ENCODE measurements at regions of chr6 and their contacts with region 1.

Region 1: DNA sequence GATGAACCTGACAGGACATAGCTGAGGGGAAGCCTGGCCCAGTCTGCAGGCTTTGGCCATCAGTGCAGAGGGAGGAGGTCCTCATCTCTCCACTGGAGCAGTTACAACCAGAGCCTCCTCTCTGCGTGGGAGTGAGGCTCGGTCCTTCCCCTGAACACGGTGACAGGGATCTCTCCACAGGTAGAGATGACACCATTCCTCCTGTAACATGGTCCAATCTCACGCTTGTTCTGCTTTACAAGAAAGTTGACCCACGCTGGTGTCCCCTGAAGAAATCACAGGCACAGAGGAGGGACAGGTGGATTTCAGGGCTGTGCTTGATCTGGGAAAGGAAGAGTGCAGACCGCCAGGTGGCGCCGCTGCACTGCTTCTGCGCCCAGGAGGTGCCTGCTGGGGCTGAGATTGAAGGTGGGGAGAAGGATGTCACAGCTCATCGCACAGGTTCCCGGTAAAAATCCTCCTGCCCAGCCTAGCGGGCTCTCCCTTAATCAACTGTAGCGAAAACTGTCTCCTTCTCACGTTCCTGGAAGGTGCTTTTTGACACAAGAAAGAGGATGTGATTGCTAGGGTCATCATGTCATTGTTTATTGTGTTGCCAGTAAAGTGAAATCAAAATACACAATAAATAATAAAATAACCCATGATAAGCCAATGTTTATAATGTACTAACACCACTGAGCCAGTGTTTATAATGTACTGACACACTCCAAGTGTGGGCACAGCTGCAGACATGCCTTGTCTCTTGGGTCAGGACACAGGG is 20.4 kb downstream of the HLA-G start:
- DNase-seq: peak; percentile 56
- H3K4me3 ChIP-seq: no peak overlapping the region
- H3K27ac ChIP-seq: no peak overlapping the region
- H3K4me1 ChIP-seq: peaks cover 5% of the 10 kb centered on the region
- H3K27me3 ChIP-seq: no peaks in the 10 kb centered on the region
- CTCF ChIP-seq: peak; percentile 78 to 96

Region 2: DNA sequence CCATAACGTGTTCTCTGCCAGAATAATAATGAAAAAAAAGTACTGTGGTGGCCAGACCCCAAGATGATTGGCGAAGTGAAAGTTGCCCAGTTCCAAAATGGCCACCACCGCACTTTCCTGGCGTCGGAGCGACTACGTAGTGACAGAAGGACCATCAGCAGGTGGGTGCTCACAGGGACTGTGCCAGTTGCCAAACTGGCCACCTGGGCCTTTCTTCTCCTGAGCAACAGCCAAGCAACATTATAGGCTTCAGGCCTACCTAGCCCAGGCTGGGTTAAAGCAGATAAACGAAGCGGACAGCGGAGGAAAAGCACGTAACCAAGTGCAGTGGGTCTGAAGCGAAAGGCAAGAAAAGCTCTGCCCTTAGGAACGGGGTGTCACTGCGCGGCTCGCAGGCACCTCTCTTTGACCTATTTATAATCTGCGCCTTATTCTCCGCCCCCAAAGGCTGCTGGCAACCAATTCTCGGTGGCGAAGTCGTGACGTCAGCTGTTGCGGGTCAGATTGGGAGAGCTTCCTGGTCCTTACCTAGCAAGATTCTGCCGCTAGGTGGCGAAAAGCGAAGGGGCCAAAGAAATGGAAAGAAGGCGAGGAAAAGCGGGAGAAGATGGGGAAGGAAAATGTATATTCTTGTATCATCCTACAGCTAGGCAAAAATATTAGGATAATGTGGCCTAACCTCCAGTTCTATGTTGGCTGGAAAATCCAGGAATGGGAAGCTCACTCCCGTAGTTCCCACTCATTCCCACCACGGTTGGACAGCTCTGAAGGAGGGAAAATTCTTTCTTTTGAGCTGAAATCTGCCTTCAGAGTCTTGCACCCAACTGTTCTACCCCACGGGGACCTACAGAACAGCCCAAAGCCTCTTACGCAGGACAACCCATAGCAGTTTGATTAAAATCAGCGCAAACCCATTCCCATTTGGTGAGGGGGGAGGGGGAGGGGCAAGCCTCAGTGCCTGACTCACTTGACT is 198.1 kb before region 1 on chr6:
- CTCF ChIA-PET with region 1: no interaction called
- dilution Hi-C with region 1: no loop called
- in situ Hi-C with region 1: no loop called
- intact Hi-C with region 1: loop called (anchors 5 kb)
- DNase-seq: peak; percentile 96
- H3K4me3 ChIP-seq: peak overlapping the region; percentile 57 to 60 (median 59)
- H3K27ac ChIP-seq: peak overlapping the region; percentile 68
- H3K4me1 ChIP-seq: peaks cover 6% of the 10 kb centered on the region
- H3K27me3 ChIP-seq: no peaks in the 10 kb centered on the region
- CTCF ChIP-seq: peak; percentile 93 to 98

Region 3: DNA sequence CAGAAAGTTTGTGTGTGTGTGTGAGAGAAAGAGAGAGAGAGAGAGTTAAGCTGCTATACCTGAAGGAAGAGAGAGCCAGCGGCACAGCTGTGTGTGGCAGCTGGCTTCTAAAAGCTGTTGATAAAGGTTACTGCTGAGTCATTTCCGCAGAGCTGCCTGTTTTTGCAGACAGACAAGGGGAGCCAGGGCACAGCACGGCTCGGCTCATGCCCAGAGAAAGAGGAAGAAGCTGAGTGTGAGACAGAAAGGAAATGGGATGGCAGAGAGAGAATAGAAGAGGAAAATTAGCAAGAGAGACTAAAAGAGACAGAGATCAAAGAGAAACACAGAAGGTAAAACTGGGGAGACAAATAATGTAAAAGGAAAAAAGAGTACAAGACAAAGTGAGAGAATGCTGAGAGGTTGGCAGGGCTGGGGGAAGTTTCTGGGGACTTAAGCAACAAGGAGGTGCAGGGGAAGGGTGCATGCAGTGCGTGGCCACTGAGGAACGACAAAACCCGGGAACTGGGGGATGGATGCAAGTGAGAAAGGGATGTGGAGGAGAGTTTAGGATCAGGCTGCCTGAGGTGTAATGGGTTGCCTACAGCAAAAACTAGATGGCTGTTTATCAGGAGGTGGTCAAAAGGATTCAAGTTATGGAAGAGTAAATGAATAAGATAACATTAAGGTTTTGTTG is 117.0 kb after region 1 on chr6:
- CTCF ChIA-PET with region 1: no interaction called
- dilution Hi-C with region 1: no loop called
- in situ Hi-C with region 1: no loop called
- intact Hi-C with region 1: loop called (anchors 1 kb)
- DNase-seq: peak; percentile 84
- H3K4me3 ChIP-seq: peak overlapping the region; percentile 32 to 61 (median 45)
- H3K27ac ChIP-seq: peak overlapping the region; percentile 66
- H3K4me1 ChIP-seq: peaks cover 39% of the 10 kb centered on the region
- H3K27me3 ChIP-seq: no peaks in the 10 kb centered on the region
- CTCF ChIP-seq: no peak

Region 4: GRCh38 chr6:30013291-30013922 is 165.4 kb after region 1 on chr6:
- CTCF ChIA-PET with region 1: interaction called, 3 read pairs
- dilution Hi-C with region 1: no loop called
- in situ Hi-C with region 1: loop called (anchors 5 kb)
- intact Hi-C with region 1: loop called (anchors 1 kb)
- DNase-seq: no peak
- H3K4me3 ChIP-seq: no peak overlapping the region
- H3K27ac ChIP-seq: no peak overlapping the region
- H3K4me1 ChIP-seq: no peaks in the 10 kb centered on the region
- H3K27me3 ChIP-seq: no peaks in the 10 kb centered on the region
- CTCF ChIP-seq: peak; percentile 59 to 87

Region 5: DNA sequence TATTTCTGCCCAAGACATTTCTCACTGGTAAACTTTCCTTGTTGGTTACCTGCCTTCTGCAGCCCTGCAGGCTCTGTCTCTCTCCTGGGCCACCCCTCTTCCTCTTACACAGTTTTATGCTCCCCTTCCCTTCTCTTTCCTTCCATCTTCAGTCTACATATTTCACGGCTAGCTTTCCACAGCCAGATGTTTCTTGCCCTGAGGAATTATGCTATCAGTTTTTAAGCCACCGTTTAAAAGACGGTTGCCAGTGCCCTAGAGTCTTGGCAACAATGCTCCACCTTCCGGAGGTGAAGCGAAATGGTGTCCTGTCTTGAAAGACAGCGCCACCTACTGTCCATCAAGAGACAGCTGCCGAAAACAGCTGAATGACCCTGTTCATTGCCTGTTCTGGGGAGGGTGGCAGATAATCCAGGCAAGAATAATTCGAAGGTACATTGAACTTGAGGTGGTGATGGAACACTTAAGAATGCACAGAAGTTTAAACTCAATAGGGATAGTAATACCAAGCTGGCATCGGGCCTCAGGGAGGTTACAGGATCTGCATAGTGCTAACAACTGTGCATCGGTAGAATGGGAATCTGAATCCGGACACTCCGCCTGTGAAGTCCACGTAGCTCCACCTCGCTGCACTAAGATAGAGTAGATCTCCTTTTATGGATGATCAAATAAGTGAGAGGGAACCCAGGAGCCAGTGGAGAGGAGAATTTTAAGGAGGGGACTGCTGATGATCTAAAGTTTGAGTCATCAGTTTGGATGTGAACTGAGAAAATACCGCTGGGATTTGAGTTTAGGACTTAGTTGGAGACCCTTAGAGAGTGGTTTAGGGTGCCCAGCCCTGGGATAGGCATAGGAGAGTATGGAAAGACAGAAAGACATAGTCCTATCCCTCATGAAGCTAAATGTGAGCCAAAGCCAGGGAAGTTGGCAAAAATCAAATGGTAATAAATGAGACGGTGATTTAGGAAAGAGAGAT is 283.1 kb after region 1 on chr6:
- CTCF ChIA-PET with region 1: no interaction called
- dilution Hi-C with region 1: no loop called
- in situ Hi-C with region 1: no loop called
- intact Hi-C with region 1: loop called (anchors 1 kb)
- DNase-seq: peak; percentile 72
- H3K4me3 ChIP-seq: no peak overlapping the region
- H3K27ac ChIP-seq: no peak overlapping the region
- H3K4me1 ChIP-seq: peaks cover 3% of the 10 kb centered on the region
- H3K27me3 ChIP-seq: peaks cover 7% of the 10 kb centered on the region
- CTCF ChIP-seq: peak; percentile 100